H1 (cell line): ENCODE measurements at regions of chr9 and their contacts with region 1.

Region 1: GRCh38 chr9:34252670-34253459 is 74.0 kb downstream of the UBAP1 start:
- DNase-seq: peak; percentile 31 to 89
- H3K4me3 ChIP-seq: no peak overlapping the region
- H3K27ac ChIP-seq: no peak overlapping the region
- H3K4me1 ChIP-seq: no peaks in the 10 kb centered on the region
- H3K27me3 ChIP-seq: no peaks in the 10 kb centered on the region
- CTCF ChIP-seq: peak; percentile 80 to 95 (median 93)
- EP300 ChIP-seq: no peak
- POLR2A ChIP-seq: no peak; a peak in 1 of 3 replicates
- RAD21 ChIP-seq: peak; percentile 68 to 75

Region 2: GRCh38 chr9:34072868-34073590 is 179.8 kb before region 1 on chr9:
- CTCF ChIA-PET with region 1: interaction called, 10 read pairs
- POLR2A ChIA-PET with region 1: no interaction called
- DNase-seq: peak in 1 of 2 experiments; percentile 49
- H3K4me3 ChIP-seq: no peak overlapping the region
- H3K27ac ChIP-seq: peak overlapping the region; percentile 49
- H3K4me1 ChIP-seq: peaks cover 0 to 11% (median 5%) of the 10 kb centered on the region in 4 experiments; a peak in 5 of 7 replicates
- H3K27me3 ChIP-seq: no peaks in the 10 kb centered on the region
- CTCF ChIP-seq: no peak
- EP300 ChIP-seq: no peak
- POLR2A ChIP-seq: no peak
- RAD21 ChIP-seq: no peak

Region 3: GRCh38 chr9:34233672-34234071 is 19.2 kb before region 1 on chr9:
- CTCF ChIA-PET with region 1: interaction called, 52 read pairs
- POLR2A ChIA-PET with region 1: no interaction called
- DNase-seq: no peak
- H3K4me3 ChIP-seq: no peak overlapping the region
- H3K27ac ChIP-seq: no peak overlapping the region
- H3K4me1 ChIP-seq: no peaks in the 10 kb centered on the region; a peak in 1 of 7 replicates
- H3K27me3 ChIP-seq: no peaks in the 10 kb centered on the region
- CTCF ChIP-seq: no peak
- EP300 ChIP-seq: no peak
- POLR2A ChIP-seq: no peak
- RAD21 ChIP-seq: no peak

Region 4: GRCh38 chr9:34271265-34272006 is 18.6 kb after region 1 on chr9:
- CTCF ChIA-PET with region 1: interaction called, 102 read pairs
- POLR2A ChIA-PET with region 1: no interaction called
- DNase-seq: no peak
- H3K4me3 ChIP-seq: no peak overlapping the region
- H3K27ac ChIP-seq: no peak overlapping the region
- H3K4me1 ChIP-seq: no peaks in the 10 kb centered on the region
- H3K27me3 ChIP-seq: no peaks in the 10 kb centered on the region
- CTCF ChIP-seq: no peak
- EP300 ChIP-seq: no peak
- POLR2A ChIP-seq: no peak
- RAD21 ChIP-seq: no peak

Region 5: GRCh38 chr9:34332076-34332964 is 79.5 kb after region 1 on chr9:
- CTCF ChIA-PET with region 1: interaction called, 18 read pairs
- POLR2A ChIA-PET with region 1: no interaction called
- DNase-seq: no peak
- H3K4me3 ChIP-seq: no peak overlapping the region
- H3K27ac ChIP-seq: no peak overlapping the region
- H3K4me1 ChIP-seq: peaks cover 2 to 10% (median 9%) of the 10 kb centered on the region in 4 experiments; a peak in 5 of 7 replicates
- H3K27me3 ChIP-seq: no peaks in the 10 kb centered on the region
- CTCF ChIP-seq: peak in 2 of 3 experiments; percentile 41 to 43; a peak in 2 of 4 replicates
- EP300 ChIP-seq: no peak
- POLR2A ChIP-seq: no peak
- RAD21 ChIP-seq: peak; percentile 70 to 78

Region 6: DNA sequence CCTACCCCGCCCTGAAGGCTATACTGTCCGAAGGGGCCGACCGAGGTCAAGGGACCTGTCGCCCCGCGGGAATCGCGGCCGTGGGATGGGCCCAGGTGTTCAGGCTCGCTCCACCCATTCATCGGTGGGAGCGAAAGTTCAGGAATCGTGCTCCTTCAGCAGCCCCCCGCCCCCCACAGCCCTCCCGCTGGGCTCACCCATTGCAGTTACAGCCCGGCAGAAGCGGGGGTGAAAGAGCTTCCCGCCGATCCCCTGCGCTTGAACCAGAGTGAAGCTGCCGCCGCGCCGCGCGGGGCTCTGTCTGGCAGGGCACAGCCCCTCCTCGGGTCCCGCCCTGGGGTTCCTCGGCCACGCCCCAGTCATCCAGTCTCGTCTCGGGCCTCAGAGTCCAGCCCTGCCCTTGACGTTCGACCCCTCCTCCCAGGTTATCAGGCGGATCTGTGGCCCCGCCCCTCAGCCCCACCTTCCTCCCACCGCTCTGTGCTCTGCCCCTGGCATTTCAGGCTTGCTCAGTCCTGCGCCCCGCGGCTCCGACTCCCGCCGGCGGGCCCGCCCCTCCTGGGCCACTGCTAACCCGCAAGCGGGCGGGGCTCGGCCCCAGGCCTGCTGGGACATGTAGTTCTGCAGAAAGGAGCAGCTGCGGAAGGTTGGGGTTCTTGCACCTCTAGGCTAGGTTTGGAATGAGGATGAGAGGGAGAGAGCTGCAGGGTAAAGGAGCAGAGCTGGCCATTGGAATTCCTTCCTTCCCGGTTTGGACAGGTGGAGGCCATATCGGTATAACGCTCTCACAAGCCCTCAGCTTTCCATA is 123.9 kb after region 1 on chr9 and contains the start of gene MYORG:
- CTCF ChIA-PET with region 1: interaction called, 99 read pairs
- POLR2A ChIA-PET with region 1: interaction called, 7 read pairs
- DNase-seq: peak; percentile 98
- H3K4me3 ChIP-seq: peak within 1 kb of the TSS; percentile 61 to 75 (median 68)
- H3K27ac ChIP-seq: no peak within 1 kb of the TSS
- H3K4me1 ChIP-seq: peaks cover 6 to 15% (median 7%) of the 10 kb centered on the region in 4 experiments
- H3K27me3 ChIP-seq: peaks cover 3 to 26% (median 22%) of the 10 kb centered on the region in 4 experiments
- CTCF ChIP-seq: no peak
- EP300 ChIP-seq: no peak
- POLR2A ChIP-seq: no peak; a peak in 1 of 3 replicates
- RAD21 ChIP-seq: no peak
- total RNA-seq, gene MYORG: 5.0 and 5.9 TPM in 2 replicates

Region 7: DNA sequence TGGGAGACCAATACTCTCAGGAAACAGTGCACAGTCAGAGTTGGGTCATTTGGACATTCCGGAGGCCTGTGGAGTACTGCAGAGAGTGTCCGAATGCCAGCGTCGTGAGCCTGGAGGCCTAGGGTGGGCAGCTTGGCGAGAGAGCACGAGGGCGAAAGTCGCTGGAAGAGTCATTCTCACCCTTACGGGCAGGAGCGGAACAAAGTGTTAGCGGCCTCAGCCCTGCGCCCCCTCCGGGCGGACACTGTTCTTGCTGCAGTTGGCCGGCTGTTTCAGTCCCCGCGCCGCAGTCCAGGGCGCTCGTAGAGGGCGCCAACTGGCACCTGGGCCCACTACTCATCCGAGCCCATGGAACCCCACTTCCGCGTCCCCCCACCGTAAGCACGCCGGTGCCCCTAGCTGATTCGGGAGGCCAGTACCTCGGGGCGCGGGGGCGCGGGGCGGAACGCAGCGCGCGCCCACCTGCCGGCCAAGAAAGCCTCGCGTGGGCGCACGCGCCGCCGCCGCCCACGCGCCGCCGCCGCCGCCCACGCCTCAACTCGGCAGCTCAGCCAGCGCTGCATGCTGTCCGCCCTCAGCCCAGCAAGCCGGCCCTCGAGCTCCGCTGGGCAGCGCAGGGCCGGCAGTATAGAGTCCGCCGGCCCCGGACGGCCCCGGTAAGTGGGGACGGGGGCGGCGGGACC is 556.8 kb after region 1 on chr9:
- CTCF ChIA-PET with region 1: no interaction called
- POLR2A ChIA-PET with region 1: no interaction called
- DNase-seq: peak; percentile 49 to 83
- H3K4me3 ChIP-seq: peak overlapping the region; percentile 18 to 54 (median 28); a peak in 7 of 8 replicates
- H3K27ac ChIP-seq: no peak overlapping the region
- H3K4me1 ChIP-seq: peaks cover 0 to 3% (median 0%) of the 10 kb centered on the region in 4 experiments; a peak in 2 of 7 replicates
- H3K27me3 ChIP-seq: peaks cover 0 to 25% (median 12%) of the 10 kb centered on the region in 4 experiments; a peak in 5 of 7 replicates
- CTCF ChIP-seq: peak; percentile 77 to 86 (median 79)
- EP300 ChIP-seq: no peak
- POLR2A ChIP-seq: no peak
- RAD21 ChIP-seq: peak; percentile 43 to 62